H1 (cell line): ENCODE measurements at regions of chr10 and their contacts with region 1.

Region 1: GRCh38 chr10:29160110-29160669 is 128.7 kb upstream of the LYZL1 start:
- DNase-seq: no peak
- H3K4me3 ChIP-seq: no peak overlapping the region
- H3K27ac ChIP-seq: peak overlapping the region; percentile 69
- H3K4me1 ChIP-seq: peaks cover 4 to 15% (median 11%) of the 10 kb centered on the region in 4 experiments; a peak in 5 of 7 replicates
- H3K27me3 ChIP-seq: peaks cover 0 to 1% (median 0%) of the 10 kb centered on the region in 4 experiments; a peak in 1 of 7 replicates
- CTCF ChIP-seq: no peak
- EP300 ChIP-seq: no peak
- POLR2A ChIP-seq: no peak
- RAD21 ChIP-seq: no peak

Region 2: DNA sequence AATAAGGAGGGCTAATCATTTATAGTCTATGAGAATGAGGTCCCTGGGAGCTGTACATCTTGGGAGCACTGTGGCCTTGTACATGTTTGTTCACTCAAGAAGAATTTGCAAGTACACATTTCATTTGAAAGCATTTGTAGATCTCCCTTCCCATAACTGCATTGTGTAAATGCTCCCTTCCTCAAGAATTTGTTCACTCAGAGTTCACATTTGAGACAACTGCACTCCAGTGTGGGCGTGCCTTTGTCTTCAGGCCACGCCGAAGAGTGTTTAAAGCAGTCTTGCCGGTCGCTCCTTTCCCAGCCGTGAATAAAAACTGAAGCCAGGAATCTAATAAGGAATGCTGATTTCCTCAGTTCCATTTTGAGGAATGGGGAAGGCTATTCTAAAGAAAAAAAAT is 162.5 kb before region 1 on chr10:
- CTCF ChIA-PET with region 1: no interaction called
- POLR2A ChIA-PET with region 1: no interaction called
- DNase-seq: no peak
- H3K4me3 ChIP-seq: no peak overlapping the region
- H3K27ac ChIP-seq: no peak overlapping the region
- H3K4me1 ChIP-seq: no peaks in the 10 kb centered on the region
- H3K27me3 ChIP-seq: no peaks in the 10 kb centered on the region
- CTCF ChIP-seq: no peak
- EP300 ChIP-seq: no peak
- POLR2A ChIP-seq: no peak
- RAD21 ChIP-seq: no peak

Region 3: GRCh38 chr10:29105531-29106215 is 54.5 kb before region 1 on chr10:
- CTCF ChIA-PET with region 1: no interaction called
- POLR2A ChIA-PET with region 1: no interaction called
- DNase-seq: no peak
- H3K4me3 ChIP-seq: no peak overlapping the region
- H3K27ac ChIP-seq: no peak overlapping the region
- H3K4me1 ChIP-seq: no peaks in the 10 kb centered on the region
- H3K27me3 ChIP-seq: no peaks in the 10 kb centered on the region
- CTCF ChIP-seq: no peak
- EP300 ChIP-seq: no peak
- POLR2A ChIP-seq: no peak
- RAD21 ChIP-seq: no peak

Region 4: DNA sequence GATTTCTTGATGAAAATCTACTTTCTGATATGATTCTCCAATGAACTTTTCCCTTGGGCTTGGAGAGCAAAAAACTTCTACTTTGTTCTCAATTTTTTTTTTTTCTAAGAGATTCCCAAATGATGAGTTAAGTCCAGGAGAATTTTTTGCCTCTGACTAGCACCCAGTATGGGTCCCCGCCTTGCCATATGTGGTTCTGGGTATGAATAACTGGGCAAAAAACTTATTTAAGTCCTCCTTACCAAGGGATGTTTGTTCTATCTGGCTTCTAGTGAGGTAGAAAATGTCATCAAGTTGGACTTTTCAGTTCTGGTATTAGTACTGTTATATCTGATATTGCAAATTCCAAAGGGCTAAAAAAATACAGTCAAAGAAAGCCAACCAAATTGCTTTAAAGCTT is 19.1 kb before region 1 on chr10:
- CTCF ChIA-PET with region 1: interaction called, 38 read pairs
- POLR2A ChIA-PET with region 1: interaction called, 20 read pairs
- DNase-seq: no peak
- H3K4me3 ChIP-seq: no peak overlapping the region; a peak in 1 of 8 replicates
- H3K27ac ChIP-seq: no peak overlapping the region
- H3K4me1 ChIP-seq: peaks cover 4 to 15% (median 8%) of the 10 kb centered on the region in 4 experiments; a peak in 4 of 7 replicates
- H3K27me3 ChIP-seq: no peaks in the 10 kb centered on the region
- CTCF ChIP-seq: no peak
- EP300 ChIP-seq: no peak
- POLR2A ChIP-seq: no peak
- RAD21 ChIP-seq: no peak